ENCODE measurements at regions of chr3 and their contacts with region 1.

Region 1: GRCh38 chr3:12294885-12295580 is 6.2 kb downstream of the PPARG start:
- DNase-seq: no peak
- H3K4me3 Mint-ChIP-seq: no peak overlapping the region
- H3K27ac Mint-ChIP-seq: no peak overlapping the region
- H3K4me1 Mint-ChIP-seq: no peaks in the 10 kb centered on the region
- H3K27me3 Mint-ChIP-seq: peaks cover 29% of the 10 kb centered on the region

Region 2: DNA sequence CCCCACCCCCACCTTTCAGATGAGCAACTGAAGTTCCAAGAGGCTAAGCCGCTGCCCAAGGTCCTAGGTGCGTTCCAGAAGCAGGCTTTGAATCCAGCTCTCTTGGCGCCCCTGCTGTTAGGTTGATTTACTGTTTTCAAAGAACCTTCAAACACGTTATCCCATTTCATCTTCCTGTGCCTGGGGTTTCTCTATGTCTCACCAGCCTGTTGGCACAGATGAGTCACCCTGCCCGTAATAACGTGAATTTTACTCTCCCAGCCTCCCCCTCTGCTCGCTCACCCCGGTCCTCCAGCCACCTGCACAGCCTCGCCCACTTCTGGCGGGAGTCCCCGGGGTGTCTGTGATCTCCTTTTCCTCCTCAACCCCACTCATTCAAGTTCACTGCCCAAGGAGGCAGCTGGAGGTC is 176.2 kb after region 1 on chr3:
- intact Hi-C with region 1: loop called (anchors 5 kb)
- DNase-seq: peak; percentile 14
- H3K4me3 Mint-ChIP-seq: no peak overlapping the region
- H3K27ac Mint-ChIP-seq: no peak overlapping the region
- H3K4me1 Mint-ChIP-seq: peaks cover 11% of the 10 kb centered on the region
- H3K27me3 Mint-ChIP-seq: no peaks in the 10 kb centered on the region